Activated naive CD8-positive, alpha-beta T cell treated with anti-CD3 and anti-CD28 coated beads, Interleukin-2, amount 10 ng/mL, durations not matched to agents 7 days and 5 days (primary cell): ENCODE measurements at regions of chr12 and their contacts with region 1.

Region 1: GRCh38 chr12:50057000-50057841 is at the start of gene ASIC1:
- DNase-seq: peak; percentile 78
- ATAC-seq: peak; percentile 38
- H3K4me3 Mint-ChIP-seq: peak within 1 kb of the TSS; percentile 88
- H3K27ac Mint-ChIP-seq: peak within 1 kb of the TSS; percentile 91
- H3K4me1 Mint-ChIP-seq: peaks cover 53% of the 10 kb centered on the region
- H3K27me3 Mint-ChIP-seq: peaks cover 14% of the 10 kb centered on the region
- total RNA-seq, gene ASIC1: 31.3 to 33.3 TPM

Region 2: DNA sequence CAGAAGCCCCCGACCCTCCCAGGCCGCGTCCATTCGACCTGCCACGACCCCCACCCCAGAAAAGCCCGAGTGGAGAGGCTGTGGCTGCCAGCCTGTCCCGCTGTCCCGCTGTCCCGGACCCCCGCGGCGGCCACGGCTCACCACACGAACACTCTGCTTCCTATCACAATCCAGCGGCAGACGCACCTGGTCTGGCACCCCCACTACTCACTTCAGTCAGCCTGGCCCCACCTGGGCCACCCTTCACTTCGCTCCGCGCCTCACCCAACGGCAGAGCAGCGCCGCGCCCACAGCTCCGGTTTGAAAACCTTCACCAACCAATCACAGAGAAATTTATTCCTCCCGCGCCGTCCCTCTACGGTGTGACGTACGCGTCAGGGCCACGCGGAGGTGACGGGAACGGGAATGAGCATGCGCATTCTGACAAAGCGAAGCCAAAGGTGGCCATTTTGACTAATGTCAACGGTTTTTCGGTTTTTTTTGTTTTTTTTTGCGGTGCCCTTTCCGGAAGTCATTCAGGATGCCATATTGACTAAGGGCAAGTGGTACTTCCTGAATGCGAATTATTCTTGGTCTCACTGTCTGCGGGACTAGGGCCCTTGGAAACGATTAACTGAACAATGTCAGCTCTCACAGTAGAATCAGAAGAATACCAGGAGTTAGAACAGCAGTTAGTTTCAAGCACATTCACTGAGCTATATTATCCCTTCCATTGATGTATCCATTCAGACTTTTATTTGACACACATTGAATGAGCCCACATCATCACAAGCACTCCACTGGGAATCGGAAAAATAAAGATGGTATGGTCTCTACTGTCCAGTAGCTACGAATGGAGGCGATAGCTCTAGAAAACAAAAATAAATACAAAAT is 31.8 kb before region 1 on chr12 and contains the start of gene RACGAP1:
- POLR2A ChIA-PET with region 1: interaction called, 17 read pairs
- DNase-seq: peak; percentile 90
- ATAC-seq: peak; percentile 98
- H3K4me3 Mint-ChIP-seq: peak within 1 kb of the TSS; percentile 100
- H3K27ac Mint-ChIP-seq: peak within 1 kb of the TSS; percentile 97
- H3K4me1 Mint-ChIP-seq: peaks cover 32% of the 10 kb centered on the region
- H3K27me3 Mint-ChIP-seq: no peaks in the 10 kb centered on the region
- total RNA-seq, gene RACGAP1: 132 to 135 TPM

Region 3: GRCh38 chr12:50167041-50167828 is 110.0 kb after region 1 on chr12 and contains the start of gene CERS5:
- POLR2A ChIA-PET with region 1: interaction called, 10 read pairs
- DNase-seq: peak; percentile 97
- ATAC-seq: peak; percentile 98
- H3K4me3 Mint-ChIP-seq: peak within 1 kb of the TSS; percentile 97
- H3K27ac Mint-ChIP-seq: peak within 1 kb of the TSS; percentile 95
- H3K4me1 Mint-ChIP-seq: peaks cover 11% of the 10 kb centered on the region
- H3K27me3 Mint-ChIP-seq: no peaks in the 10 kb centered on the region
- total RNA-seq, gene CERS5: 47.1 to 53.0 TPM